Activated T-helper 1 cell treated with anti-CD3 and anti-CD28 coated beads, Interleukin-12 subunit alpha, Interleukin-12 subunit beta, Interleukin-2, Interleukin-4 antibody, amounts not matched to agents 30 ng/mL and 10 ng/mL and 1 ng/mL, durations not matched to agents 14 hours and 24 hours and 36 hours (primary cell): ENCODE measurements at regions of chr14 and their contacts with region 1.

Region 1: GRCh38 chr14:39432179-39432618 is at the start of gene FBXO33:
- DNase-seq: peak; percentile 96
- H3K4me3 Mint-ChIP-seq: peak within 1 kb of the TSS; percentile 99
- H3K27ac Mint-ChIP-seq: peak within 1 kb of the TSS; percentile 100
- H3K4me1 Mint-ChIP-seq: peaks cover 41% of the 10 kb centered on the region
- H3K27me3 Mint-ChIP-seq: no peaks in the 10 kb centered on the region
- total RNA-seq, gene FBXO33: 18.1 and 20.5 TPM in 2 replicates

Region 2: DNA sequence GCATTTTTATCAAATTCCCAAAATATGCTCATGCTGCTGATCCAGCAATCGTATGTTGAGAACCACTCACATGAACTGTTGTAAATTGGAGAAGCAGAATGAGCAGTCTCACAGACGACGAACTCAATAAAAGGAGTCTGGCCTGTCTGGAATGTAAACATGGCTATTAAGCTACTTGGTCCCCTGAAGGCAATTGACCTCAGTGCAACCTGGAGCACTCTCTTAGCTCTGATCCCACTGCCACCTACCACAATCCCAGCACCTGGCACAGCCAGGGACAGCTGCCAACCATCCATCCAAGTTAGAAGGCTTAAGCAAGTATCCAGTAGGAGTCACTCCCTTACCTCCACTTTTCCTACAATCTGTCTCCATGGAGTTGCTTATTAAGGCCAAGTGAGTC is 769.4 kb before region 1 on chr14:
- intact Hi-C with region 1: no loop called
- DNase-seq: no peak
- H3K4me3 Mint-ChIP-seq: no peak overlapping the region
- H3K27ac Mint-ChIP-seq: no peak overlapping the region
- H3K4me1 Mint-ChIP-seq: no peaks in the 10 kb centered on the region
- H3K27me3 Mint-ChIP-seq: no peaks in the 10 kb centered on the region

Region 3: DNA sequence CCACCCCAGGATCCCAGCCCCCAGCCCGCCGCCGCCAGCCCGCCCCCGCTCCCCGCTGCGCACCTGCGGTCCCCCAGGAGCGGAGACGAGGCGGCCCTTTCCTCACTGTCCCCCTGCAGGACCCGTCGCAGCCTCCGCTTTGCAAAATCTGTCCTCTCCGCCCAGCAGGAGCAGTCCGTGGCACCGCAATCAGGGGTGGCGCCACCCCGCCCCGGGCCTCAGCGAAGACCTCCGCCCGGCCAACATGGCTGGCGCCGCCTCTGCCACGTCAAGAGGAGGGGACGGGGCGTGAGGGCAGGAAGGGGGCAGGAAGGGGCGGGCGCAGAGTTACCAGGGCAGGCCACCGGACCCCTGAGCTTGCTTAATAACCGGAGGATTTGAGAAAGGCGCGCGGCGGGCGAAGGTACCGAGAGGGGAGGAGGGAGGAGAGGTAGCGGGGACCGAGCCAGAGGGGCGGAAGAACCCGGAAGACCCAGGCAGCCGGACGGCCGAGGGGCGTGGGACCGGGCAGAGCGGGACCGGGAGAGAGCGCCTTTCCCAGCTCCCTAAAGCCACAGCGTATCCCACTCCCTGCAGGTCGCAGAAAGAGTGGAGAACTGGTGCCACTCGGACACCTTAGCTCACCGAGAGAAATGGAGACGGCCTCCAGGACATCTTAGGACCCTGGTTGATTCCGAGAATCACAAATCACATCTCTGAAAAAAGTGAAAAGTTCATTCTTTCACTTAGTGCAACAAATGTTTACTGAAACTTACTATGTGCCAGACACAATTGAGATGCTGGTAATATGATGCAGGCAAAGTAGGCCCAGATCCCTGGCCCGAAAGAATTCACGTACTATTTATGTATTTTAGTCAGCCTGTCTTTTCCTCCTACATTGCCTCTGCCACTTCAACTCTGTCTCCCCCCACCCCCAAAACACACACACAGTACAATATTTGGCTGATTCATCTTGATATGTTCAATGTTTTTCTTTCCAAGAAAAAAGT is 328.9 kb before region 1 on chr14 and contains the start of gene SEC23A:
- intact Hi-C with region 1: loop called (anchors 1 kb)
- DNase-seq: peak; percentile 83
- H3K4me3 Mint-ChIP-seq: peak within 1 kb of the TSS; percentile 98
- H3K27ac Mint-ChIP-seq: peak within 1 kb of the TSS; percentile 96
- H3K4me1 Mint-ChIP-seq: peaks cover 57% of the 10 kb centered on the region
- H3K27me3 Mint-ChIP-seq: no peaks in the 10 kb centered on the region
- total RNA-seq, gene SEC23A: 61.2 and 72.0 TPM in 2 replicates

Region 4: GRCh38 chr14:39174560-39175444 is 257.4 kb before region 1 on chr14 and contains the start of gene PNN:
- intact Hi-C with region 1: loop called (anchors 1 kb)
- DNase-seq: peak; percentile 97
- H3K4me3 Mint-ChIP-seq: peak within 1 kb of the TSS; percentile 94
- H3K27ac Mint-ChIP-seq: peak within 1 kb of the TSS; percentile 95
- H3K4me1 Mint-ChIP-seq: peaks cover 29% of the 10 kb centered on the region
- H3K27me3 Mint-ChIP-seq: no peaks in the 10 kb centered on the region
- total RNA-seq, gene PNN: 111 and 116 TPM in 2 replicates

Region 5: GRCh38 chr14:39383026-39383660 is 49.1 kb before region 1 on chr14:
- intact Hi-C with region 1: loop called (anchors 2 kb)
- DNase-seq: no peak
- H3K4me3 Mint-ChIP-seq: no peak overlapping the region
- H3K27ac Mint-ChIP-seq: peak overlapping the region; percentile 3
- H3K4me1 Mint-ChIP-seq: peaks cover 16% of the 10 kb centered on the region
- H3K27me3 Mint-ChIP-seq: no peaks in the 10 kb centered on the region